ENCODE measurements at regions of chr20 and their contacts with region 1.

Region 1: DNA sequence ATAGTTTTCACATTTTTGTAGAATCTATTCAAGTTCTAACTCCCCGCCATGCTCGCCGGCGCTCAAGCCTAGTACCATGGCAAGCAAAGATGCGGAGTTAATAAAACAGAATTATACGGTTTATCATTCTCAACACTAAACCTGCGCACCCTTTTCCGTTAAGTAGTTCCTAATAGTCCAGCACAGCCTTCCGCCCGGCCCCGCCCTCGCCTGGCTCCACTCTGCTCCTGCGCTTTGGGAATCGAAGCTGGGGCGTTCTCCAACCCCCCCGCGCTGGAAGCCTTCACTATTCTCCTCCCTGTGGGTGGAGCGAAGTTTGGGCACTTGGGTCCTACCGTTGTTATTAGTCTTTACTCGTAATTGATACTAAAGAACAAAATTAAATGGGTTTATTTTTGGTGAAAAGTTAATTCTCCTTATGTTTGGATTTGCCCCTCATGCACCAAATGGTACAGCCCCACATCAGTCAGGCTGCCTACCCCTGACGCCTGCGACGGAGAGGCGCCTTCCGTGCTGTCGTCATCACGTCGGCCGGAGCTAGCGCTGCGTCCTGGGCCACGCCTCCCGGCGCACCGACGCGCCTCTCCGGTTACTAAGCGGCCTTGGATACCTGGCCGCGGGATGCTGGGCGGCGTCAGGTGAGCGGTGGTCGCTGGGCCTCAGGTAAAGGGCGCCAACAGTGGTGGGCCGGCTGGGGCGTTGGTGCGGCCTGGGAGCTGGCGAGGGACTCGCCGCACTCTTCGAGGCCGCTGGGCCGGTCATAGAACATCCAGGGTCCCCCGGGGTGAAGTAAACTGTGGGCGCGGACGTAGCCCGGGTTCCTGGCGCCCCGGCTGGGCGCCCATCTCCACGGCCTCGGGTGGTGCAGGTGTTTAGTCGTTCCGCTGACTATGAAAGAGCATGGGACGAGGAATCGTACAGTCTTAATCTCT is at the start of gene IFT52:
- DNase-seq: peak; percentile 93
- ATAC-seq: peak; percentile 98
- H3K4me3 ChIP-seq: peak within 1 kb of the TSS; percentile 84 to 89 (median 86)
- H3K27ac ChIP-seq: peak within 1 kb of the TSS; percentile 79
- H3K4me1 ChIP-seq: peaks cover 32% of the 10 kb centered on the region
- H3K27me3 ChIP-seq: no peaks in the 10 kb centered on the region
- CTCF ChIP-seq: peak; percentile 35
- EP300 ChIP-seq: peak; percentile 17 to 39; a peak in 2 of 4 replicates
- POLR2A ChIP-seq: peak; percentile 53 to 88; a peak in 3 of 4 replicates
- RAD21 ChIP-seq: peak; percentile 37; the same call in 1 of the 2 replicates
- total RNA-seq, gene IFT52: 64.0 and 80.6 TPM in 2 replicates

Region 2: DNA sequence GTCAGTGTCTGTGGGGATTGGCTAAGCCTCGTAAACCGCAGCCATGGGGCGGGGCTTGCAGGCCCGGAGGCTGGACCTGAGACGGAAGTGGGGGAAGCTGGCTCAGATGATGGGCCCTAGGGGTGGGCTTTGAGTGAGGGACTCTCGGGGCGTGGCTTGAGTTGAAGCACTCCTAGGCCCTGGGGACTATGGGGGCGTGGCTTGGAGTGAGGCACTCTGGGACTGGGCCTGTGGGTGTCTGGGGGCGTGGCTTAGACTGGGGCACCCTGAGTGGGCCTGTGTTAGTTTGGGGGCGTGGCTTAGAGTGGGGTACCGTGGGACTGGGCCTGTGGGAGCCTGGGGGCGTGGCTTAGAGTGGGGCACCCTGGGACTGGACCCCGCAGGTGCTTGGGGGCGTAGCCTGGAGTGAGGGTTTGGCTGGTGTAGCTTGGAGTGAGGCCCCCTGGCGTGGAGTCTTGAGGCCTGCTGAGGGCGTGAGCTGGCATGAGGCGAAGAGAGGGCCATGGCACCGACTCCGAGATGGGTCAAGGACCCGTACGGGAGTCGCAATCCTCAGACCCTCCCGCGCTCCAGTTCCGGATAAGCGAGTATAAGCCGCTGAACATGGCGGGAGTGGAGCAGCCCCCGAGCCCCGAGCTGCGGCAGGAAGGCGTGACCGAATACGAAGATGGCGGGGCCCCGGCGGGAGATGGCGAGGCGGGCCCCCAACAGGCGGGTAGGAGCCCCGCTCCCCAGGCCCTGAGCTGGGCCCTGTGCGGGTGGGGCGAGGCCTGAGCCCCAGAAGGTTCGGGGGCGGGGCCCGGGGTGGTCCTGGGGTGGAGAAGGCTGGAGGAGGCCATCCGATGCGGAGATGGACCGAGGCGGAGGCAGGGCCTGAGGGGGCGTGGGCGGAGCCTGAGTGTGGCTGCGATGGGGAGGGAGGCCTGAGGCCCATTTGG is 76.3 kb before region 1 on chr20:
- CTCF ChIA-PET with region 1: no interaction called
- POLR2A ChIA-PET with region 1: interaction called, 14 read pairs
- in situ Hi-C with region 1: no loop called
- intact Hi-C with region 1: no loop called
- DNase-seq: peak; percentile 100
- ATAC-seq: peak; percentile 87
- H3K4me3 ChIP-seq: peak overlapping the region; percentile 62 to 84 (median 81)
- H3K27ac ChIP-seq: peak overlapping the region; percentile 16
- H3K4me1 ChIP-seq: peaks cover 26% of the 10 kb centered on the region
- H3K27me3 ChIP-seq: no peaks in the 10 kb centered on the region
- CTCF ChIP-seq: peak; percentile 80
- EP300 ChIP-seq: no peak
- POLR2A ChIP-seq: peak; percentile 65 to 89
- RAD21 ChIP-seq: peak; percentile 69

Region 3: DNA sequence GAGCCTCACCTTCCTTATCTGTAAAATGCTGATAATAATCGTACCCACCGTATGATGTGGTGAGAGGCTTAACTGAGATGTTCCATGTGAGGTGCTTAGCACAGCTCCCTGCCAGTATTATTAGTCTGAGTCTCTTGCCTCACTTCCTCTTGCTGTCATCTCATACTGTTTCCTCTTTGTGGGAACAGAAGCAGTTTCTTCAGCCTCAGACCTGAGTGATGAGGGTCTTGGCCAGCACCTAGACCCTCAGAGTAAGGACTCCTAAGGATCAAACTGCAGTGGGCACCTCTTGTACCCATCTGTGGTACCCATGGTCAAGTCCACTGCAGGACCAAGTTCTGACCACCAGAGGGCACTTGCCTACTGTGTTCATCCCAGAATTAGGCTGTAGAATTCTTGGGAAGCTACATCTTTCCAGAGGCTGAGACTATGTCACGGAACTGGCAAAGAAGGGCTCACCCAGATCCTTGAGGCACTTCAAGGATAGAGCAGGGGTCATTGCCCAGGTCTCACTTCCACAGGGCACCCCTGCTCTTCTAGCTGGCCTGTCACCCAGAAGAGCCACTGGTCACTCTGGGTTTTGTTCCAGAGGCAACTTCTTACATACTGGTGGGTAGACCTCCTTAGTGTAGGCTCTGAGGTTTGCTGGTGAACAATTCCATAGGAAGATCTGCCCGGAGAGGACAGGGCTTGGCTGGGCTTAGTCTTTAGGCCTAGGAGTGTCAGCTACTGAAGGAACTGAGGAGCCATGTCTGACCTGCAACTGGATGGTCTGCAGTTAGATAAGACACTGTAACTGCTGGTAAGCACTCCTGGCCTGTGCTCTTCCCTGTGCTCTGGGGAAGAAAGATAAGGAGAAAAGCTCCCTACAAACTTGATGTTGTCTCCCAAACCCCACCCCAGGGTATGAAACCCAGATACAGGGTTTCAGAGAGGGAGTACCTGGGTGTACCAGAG is 52.5 kb before region 1 on chr20:
- CTCF ChIA-PET with region 1: no interaction called
- POLR2A ChIA-PET with region 1: interaction called, 45 read pairs
- in situ Hi-C with region 1: no loop called
- intact Hi-C with region 1: loop called (anchors 1 kb)
- DNase-seq: peak; percentile 74
- ATAC-seq: peak; percentile 67
- H3K4me3 ChIP-seq: no peak overlapping the region
- H3K27ac ChIP-seq: no peak overlapping the region
- H3K4me1 ChIP-seq: peaks cover 45% of the 10 kb centered on the region
- H3K27me3 ChIP-seq: no peaks in the 10 kb centered on the region; a peak in 1 of 5 replicates
- CTCF ChIP-seq: peak; percentile 99
- EP300 ChIP-seq: no peak
- POLR2A ChIP-seq: no peak
- RAD21 ChIP-seq: peak; percentile 97

Region 4: GRCh38 chr20:43549416-43550065 is 41.1 kb before region 1 on chr20:
- CTCF ChIA-PET with region 1: no interaction called
- POLR2A ChIA-PET with region 1: interaction called, 11 read pairs
- in situ Hi-C with region 1: no loop called
- intact Hi-C with region 1: no loop called
- DNase-seq: no peak
- ATAC-seq: no peak
- H3K4me3 ChIP-seq: no peak overlapping the region
- H3K27ac ChIP-seq: no peak overlapping the region
- H3K4me1 ChIP-seq: peaks cover 68% of the 10 kb centered on the region
- H3K27me3 ChIP-seq: no peaks in the 10 kb centered on the region
- CTCF ChIP-seq: 0 out of 2 replicates have a peak, but pooled peaks have one; percentile 8
- EP300 ChIP-seq: no peak
- POLR2A ChIP-seq: no peak
- RAD21 ChIP-seq: no peak

Region 5: DNA sequence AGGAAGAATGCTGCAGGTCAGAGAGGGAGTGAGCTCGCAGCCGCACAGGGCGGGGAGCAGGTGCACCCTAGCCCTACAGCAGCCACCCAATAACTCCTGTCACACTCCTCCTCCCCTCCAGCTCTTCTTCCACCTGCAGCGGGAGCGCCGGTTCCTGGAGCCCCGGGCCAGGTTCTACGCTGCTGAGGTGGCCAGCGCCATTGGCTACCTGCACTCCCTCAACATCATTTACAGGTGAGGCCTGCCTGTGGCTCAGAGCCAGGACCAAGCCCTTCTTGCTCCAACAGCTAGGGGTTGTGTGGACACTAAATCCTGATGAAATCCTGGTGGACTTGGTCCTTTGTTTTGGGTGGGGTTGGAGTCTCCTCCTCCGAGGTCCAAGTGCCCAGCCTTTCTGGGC is 20.2 kb before region 1 on chr20:
- CTCF ChIA-PET with region 1: no interaction called
- POLR2A ChIA-PET with region 1: interaction called, 13 read pairs
- in situ Hi-C with region 1: no loop called
- intact Hi-C with region 1: no loop called
- DNase-seq: no peak
- ATAC-seq: no peak
- H3K4me3 ChIP-seq: no peak overlapping the region
- H3K27ac ChIP-seq: no peak overlapping the region
- H3K4me1 ChIP-seq: peaks cover 14% of the 10 kb centered on the region
- H3K27me3 ChIP-seq: no peaks in the 10 kb centered on the region
- CTCF ChIP-seq: no peak
- EP300 ChIP-seq: no peak
- POLR2A ChIP-seq: no peak
- RAD21 ChIP-seq: no peak

Region 6: GRCh38 chr20:43650997-43651525 is 60.4 kb after region 1 on chr20:
- CTCF ChIA-PET with region 1: no interaction called
- POLR2A ChIA-PET with region 1: interaction called, 18 read pairs
- in situ Hi-C with region 1: no loop called
- intact Hi-C with region 1: loop called (anchors 1 kb)
- DNase-seq: no peak
- ATAC-seq: no peak
- H3K4me3 ChIP-seq: no peak overlapping the region
- H3K27ac ChIP-seq: no peak overlapping the region
- H3K4me1 ChIP-seq: peaks cover 44% of the 10 kb centered on the region
- H3K27me3 ChIP-seq: no peaks in the 10 kb centered on the region
- CTCF ChIP-seq: no peak
- EP300 ChIP-seq: no peak
- POLR2A ChIP-seq: no peak
- RAD21 ChIP-seq: no peak

Region 7: DNA sequence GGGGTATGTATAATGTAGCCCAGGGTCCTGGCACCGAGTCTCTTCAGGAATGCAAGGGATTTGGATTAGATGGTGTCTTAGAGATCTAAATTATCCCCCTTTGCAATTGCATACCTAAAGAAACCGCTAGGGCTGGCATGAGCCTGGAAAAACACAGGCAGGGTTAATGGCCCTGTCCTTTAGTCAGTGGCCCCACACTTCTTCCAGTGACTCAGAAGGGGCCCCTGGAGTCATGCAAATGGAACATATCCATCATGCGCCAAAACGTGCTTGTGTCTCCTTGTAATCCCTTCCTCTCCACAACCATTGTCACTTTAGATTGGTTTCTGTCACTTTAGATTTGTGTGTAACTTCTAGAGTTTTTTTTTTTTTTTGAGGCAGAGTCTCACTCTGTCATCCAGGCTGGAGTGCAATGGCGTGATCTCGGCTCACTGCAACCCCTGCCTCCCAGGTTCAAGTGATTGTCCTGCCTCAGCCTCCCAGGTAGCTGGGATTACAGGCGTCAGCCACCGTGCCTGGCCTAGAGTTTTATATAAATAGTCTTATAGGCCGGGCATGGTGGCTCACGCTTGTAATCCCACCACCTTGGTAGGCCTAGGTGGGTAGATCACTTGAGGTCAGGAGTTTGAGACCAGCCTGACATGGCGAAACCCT is 67.5 kb after region 1 on chr20:
- CTCF ChIA-PET with region 1: no interaction called
- POLR2A ChIA-PET with region 1: interaction called, 18 read pairs
- in situ Hi-C with region 1: no loop called
- intact Hi-C with region 1: loop called (anchors 1 kb)
- DNase-seq: peak; percentile 79
- ATAC-seq: peak; percentile 72
- H3K4me3 ChIP-seq: peak overlapping the region; percentile 82 to 94 (median 86)
- H3K27ac ChIP-seq: peak overlapping the region; percentile 84
- H3K4me1 ChIP-seq: peaks cover 39% of the 10 kb centered on the region
- H3K27me3 ChIP-seq: no peaks in the 10 kb centered on the region; a peak in 1 of 5 replicates
- CTCF ChIP-seq: no peak; the same call in 1 of the 2 replicates
- EP300 ChIP-seq: no peak; a peak in 1 of 4 replicates
- POLR2A ChIP-seq: no peak
- RAD21 ChIP-seq: no peak